ENCODE measurements at regions of chr14 and their contacts with region 1.

Region 1: DNA sequence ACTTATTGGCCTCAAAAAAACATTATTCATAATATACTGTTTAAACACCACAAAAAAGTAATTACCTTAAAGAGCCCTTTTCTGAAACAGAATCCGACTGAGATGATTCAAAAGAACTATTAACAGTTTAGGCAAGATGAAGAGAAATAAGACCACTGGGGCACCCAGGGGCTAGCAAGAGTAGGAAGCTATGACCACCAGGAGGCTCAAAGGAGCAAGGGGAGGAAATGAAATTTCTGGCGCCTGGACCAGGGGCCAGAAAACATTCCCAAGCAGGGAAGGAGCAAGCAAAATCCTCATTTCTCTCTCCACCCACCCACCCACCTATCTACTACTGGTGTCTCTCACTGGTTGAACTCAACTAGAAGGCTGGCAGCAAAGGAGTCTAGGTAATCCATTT is 6.2 kb upstream of the DCAF4 start:
- DNase-seq: no peak
- H3K4me3 ChIP-seq: no peak overlapping the region
- H3K27ac ChIP-seq: no peak overlapping the region
- H3K4me1 ChIP-seq: no peaks in the 10 kb centered on the region
- H3K27me3 ChIP-seq: peaks cover 0 to 3% (median under 1%) of the 10 kb centered on the region in 4 experiments; a peak in 2 of 7 replicates
- CTCF ChIP-seq: peak; percentile 43 to 64 (median 54)
- EP300 ChIP-seq: no peak
- POLR2A ChIP-seq: no peak
- RAD21 ChIP-seq: peak; percentile 27 to 63; a peak in 3 of 4 replicates

Region 2: GRCh38 chr14:72792051-72792788 is 127.8 kb before region 1 on chr14:
- CTCF ChIA-PET with region 1: no interaction called
- POLR2A ChIA-PET with region 1: no interaction called
- DNase-seq: no peak
- H3K4me3 ChIP-seq: no peak overlapping the region
- H3K27ac ChIP-seq: no peak overlapping the region
- H3K4me1 ChIP-seq: peaks cover 1 to 17% (median 6%) of the 10 kb centered on the region in 4 experiments; a peak in 4 of 7 replicates
- H3K27me3 ChIP-seq: no peaks in the 10 kb centered on the region
- CTCF ChIP-seq: no peak
- EP300 ChIP-seq: no peak
- POLR2A ChIP-seq: no peak
- RAD21 ChIP-seq: no peak

Region 3: GRCh38 chr14:72942782-72943333 is 22.8 kb after region 1 on chr14:
- CTCF ChIA-PET with region 1: interaction called, 16 read pairs
- POLR2A ChIA-PET with region 1: no interaction called
- DNase-seq: no peak
- H3K4me3 ChIP-seq: no peak overlapping the region
- H3K27ac ChIP-seq: no peak overlapping the region
- H3K4me1 ChIP-seq: no peaks in the 10 kb centered on the region
- H3K27me3 ChIP-seq: no peaks in the 10 kb centered on the region
- CTCF ChIP-seq: peak; percentile 28 to 54 (median 45); a peak in 3 of 4 replicates
- EP300 ChIP-seq: no peak
- POLR2A ChIP-seq: no peak
- RAD21 ChIP-seq: peak; percentile 65 to 72

Measured in H1 (cell line).